ENCODE measurements at regions of chr12 and their contacts with region 1.

Region 1: GRCh38 chr12:42444192-42444943 is 118.4 kb downstream of the PPHLN1 start:
- DNase-seq: no peak
- H3K4me3 ChIP-seq: no peak overlapping the region
- H3K27ac ChIP-seq: no peak overlapping the region
- H3K4me1 ChIP-seq: no peaks in the 10 kb centered on the region
- H3K27me3 ChIP-seq: no peaks in the 10 kb centered on the region
- CTCF ChIP-seq: no peak

Region 2: DNA sequence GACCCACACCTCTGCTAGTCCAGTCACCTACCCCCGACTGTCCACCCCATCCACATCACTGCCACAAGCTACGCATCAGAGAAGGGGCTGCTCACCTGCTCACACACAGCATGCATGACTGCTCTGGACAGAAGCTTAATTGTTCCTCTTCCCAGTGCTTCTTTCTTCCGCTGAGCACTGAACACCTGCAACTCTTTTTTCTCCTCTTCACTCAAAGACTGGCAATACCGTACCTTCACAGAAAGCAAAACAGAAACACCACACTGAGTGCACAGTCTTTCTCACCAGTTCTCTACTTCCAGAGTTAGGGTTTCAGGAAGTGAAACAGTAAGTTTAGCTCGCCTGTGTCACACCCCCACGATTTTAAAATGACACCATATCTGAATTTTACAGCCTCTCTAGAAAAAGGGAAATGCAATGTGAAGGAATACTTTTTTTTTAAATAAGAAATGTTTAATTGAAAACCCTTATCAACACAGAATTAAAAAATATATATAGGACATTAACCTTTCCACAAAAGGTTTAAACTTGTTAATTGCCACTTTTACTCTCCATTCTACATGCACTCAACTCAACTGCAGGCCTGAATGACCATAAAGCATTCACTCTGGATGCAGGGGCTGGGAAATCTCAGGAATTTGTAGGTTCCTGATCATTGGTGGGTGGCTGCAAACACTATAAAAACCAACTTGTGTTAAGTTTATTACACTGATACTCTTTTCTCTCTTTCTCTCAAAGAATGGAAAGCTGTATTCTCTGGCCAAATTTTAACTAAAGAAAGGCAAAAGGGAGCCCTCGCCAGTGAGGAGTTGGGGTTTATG is 25.2 kb after region 1 on chr12:
- CTCF ChIA-PET with region 1: no interaction called
- POLR2A ChIA-PET with region 1: interaction called, 10 read pairs
- intact Hi-C with region 1: no loop called
- DNase-seq: no peak
- H3K4me3 ChIP-seq: no peak overlapping the region
- H3K27ac ChIP-seq: no peak overlapping the region
- H3K4me1 ChIP-seq: peaks cover 21% of the 10 kb centered on the region
- H3K27me3 ChIP-seq: no peaks in the 10 kb centered on the region
- CTCF ChIP-seq: no peak